ENCODE measurements at regions of chr14 and their contacts with region 1.

Region 1: DNA sequence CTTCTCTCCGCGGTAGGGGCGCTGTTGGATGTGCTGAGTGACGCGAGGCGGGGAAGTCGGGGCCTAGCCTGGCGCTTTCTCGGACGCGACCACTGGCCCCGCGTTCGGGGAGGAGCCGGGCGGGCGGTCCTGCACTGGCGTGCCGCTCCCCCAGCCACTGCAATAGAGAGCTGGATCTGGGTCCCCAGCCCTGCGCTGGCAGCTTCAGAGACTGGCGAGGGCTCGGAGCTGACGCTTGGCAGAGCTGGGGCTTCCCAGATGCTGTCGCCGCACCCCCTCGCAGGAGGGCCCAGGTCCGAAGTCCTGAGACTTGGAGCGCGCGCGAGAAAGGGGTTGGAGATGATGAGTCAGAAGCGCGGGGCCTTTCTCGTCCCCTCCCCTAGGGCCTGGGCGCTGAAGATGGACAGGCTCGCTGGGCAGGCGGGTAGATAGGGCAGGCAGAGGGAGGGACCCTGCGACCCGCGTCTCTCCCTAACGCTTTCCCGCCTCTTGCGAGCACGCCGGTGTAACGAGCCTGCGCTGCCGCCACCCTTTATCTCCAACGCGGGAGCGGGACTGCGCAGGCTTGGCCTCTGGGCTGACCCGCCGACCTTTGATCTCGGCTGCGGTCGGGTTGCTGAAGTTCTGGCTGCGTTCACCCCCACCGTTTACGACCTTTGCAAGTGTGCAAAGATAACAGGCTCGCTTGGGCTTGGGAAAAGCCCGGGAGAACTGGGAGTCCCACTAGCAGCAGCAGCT is 3.0 kb downstream of the TMEM253 start:
- DNase-seq: peak; percentile 94 to 97
- ATAC-seq: peak; percentile 95 to 98 (median 97)
- H3K4me3 ChIP-seq: peak overlapping the region; percentile 50 to 80 (median 64)
- H3K27ac ChIP-seq: peak overlapping the region; percentile 90 to 99 (median 97)
- H3K4me1 ChIP-seq: peaks cover 6 to 58% (median 42%) of the 10 kb centered on the region in 9 donors
- H3K27me3 ChIP-seq: no peaks in the 10 kb centered on the region
- CTCF ChIP-seq: peak; percentile 70 to 92 (median 81)

Region 2: GRCh38 chr14:20794644-20795369 is 309.1 kb before region 1 on chr14:
- intact Hi-C with region 1: no loop called
- DNase-seq: no peak
- ATAC-seq: no peak
- H3K4me3 ChIP-seq: no peak overlapping the region
- H3K27ac ChIP-seq: peak overlapping the region in 1 of 10 donors; percentile 28
- H3K4me1 ChIP-seq: peaks cover 3 to 55% (median 24%) of the 10 kb centered on the region in 9 donors
- H3K27me3 ChIP-seq: no peaks in the 10 kb centered on the region
- CTCF ChIP-seq: no peak

Region 3: GRCh38 chr14:21014761-21015190 is 89.1 kb before region 1 on chr14:
- intact Hi-C with region 1: loop called in 4 of 10 experiments (anchors 5 kb)
- DNase-seq: peak; percentile 70 to 91
- ATAC-seq: peak; percentile 70 to 89 (median 83)
- H3K4me3 ChIP-seq: no peak overlapping the region
- H3K27ac ChIP-seq: peak overlapping the region in 4 of 10 donors; percentile 6 to 34 (median 14)
- H3K4me1 ChIP-seq: peaks cover 0 to 38% (median 6%) of the 10 kb centered on the region in 9 donors
- H3K27me3 ChIP-seq: no peaks in the 10 kb centered on the region
- CTCF ChIP-seq: peak; percentile 84 to 98 (median 93)

Region 4: GRCh38 chr14:21024585-21025370 is 79.1 kb before region 1 on chr14 and contains the start of gene NDRG2:
- intact Hi-C with region 1: loop called in 2 of 10 experiments (anchors 5 kb)
- DNase-seq: peak; percentile 87 to 91
- ATAC-seq: peak; percentile 82 to 94 (median 85)
- H3K4me3 ChIP-seq: peak within 1 kb of the TSS; percentile 59 to 98 (median 82)
- H3K27ac ChIP-seq: peak within 1 kb of the TSS; percentile 86 to 100 (median 98)
- H3K4me1 ChIP-seq: peaks cover 14 to 57% (median 36%) of the 10 kb centered on the region in 9 donors
- H3K27me3 ChIP-seq: peaks cover 0 to 23% (median 0%) of the 10 kb centered on the region in 7 donors
- CTCF ChIP-seq: no peak
- total RNA-seq, gene NDRG2: 242 to 420 (median 299) TPM

Region 5: DNA sequence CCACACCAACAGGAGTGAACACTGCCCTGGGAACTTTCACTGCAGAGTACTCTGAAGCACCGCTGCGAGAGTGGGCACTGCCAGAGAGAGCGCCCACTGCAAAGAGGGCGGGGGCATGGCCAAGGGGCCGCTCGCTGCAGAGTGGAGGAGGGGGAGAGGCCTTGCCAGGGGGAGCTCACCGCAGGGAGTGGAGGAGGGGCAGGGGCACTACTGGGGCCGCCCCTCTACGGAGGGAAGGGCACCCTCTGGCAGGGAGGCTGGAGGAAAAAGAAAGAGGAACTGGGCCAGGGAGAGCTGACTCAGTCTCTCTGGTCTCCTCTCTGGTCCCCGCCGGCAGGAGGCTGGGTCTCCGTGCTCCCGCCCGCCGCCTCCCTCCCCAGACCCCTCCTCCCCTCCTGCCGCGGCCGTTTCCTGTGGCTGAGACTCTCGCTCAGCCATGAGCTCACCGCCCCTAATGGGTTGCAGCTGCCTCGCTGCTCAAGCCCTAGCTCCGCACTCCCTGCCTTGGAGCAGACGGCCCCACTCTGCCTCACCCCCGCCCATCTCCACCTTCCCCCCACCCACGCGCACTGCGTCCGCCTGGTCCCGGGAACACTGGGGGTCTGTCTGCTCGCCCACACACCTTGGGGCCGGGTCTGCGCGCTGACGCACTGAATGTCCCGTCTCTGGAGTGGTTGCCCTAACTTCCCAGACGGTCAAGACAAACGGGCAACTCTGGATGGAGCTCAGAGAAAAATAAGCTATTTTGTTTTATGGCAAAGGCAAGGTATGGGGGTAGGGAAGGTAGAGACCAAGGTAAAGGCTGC is 32.5 kb before region 1 on chr14:
- intact Hi-C with region 1: loop called (anchors 1 to 5 kb)
- DNase-seq: peak; percentile 88 to 91
- ATAC-seq: peak; percentile 69 to 81 (median 74)
- H3K4me3 ChIP-seq: peak overlapping the region; percentile 61 to 86 (median 78)
- H3K27ac ChIP-seq: peak overlapping the region; percentile 64 to 98 (median 95)
- H3K4me1 ChIP-seq: peaks cover 6 to 44% (median 34%) of the 10 kb centered on the region in 9 donors
- H3K27me3 ChIP-seq: peaks cover 0 to 17% (median 0%) of the 10 kb centered on the region in 7 donors
- CTCF ChIP-seq: peak in 2 of 9 donors; percentile 5 to 15

Region 6: GRCh38 chr14:21092273-21093011 is 11.4 kb before region 1 on chr14:
- intact Hi-C with region 1: loop called in 1 of 10 experiments (anchors 1 kb)
- DNase-seq: peak; percentile 80 to 90
- ATAC-seq: peak; percentile 77 to 91 (median 86)
- H3K4me3 ChIP-seq: no peak overlapping the region
- H3K27ac ChIP-seq: peak overlapping the region in 3 of 10 donors; percentile 11 to 53 (median 28)
- H3K4me1 ChIP-seq: peaks cover 0 to 39% (median 17%) of the 10 kb centered on the region in 9 donors
- H3K27me3 ChIP-seq: no peaks in the 10 kb centered on the region
- CTCF ChIP-seq: peak; percentile 99 to 100 (median 100)

Region 7: DNA sequence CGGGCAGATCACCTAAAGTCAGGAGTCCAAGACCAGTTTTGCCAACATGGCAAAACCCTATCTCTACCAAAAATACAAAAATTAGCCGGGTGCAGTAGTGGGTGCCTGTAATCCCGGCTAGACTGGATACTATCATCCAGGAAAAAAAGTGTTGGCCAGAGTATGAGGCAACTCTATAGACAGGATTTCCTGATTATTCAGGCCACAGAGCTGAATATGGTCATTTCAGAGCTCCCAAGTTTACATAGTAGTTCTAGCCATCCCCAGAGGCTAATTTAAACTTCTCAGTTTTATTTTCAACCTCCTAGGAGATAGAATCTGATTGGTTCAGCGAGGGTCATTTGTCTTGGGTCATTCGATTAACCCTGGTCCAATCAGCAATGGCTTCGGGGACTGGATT is 183.3 kb after region 1 on chr14:
- intact Hi-C with region 1: no loop called
- DNase-seq: no peak
- ATAC-seq: no peak
- H3K4me3 ChIP-seq: no peak overlapping the region
- H3K27ac ChIP-seq: no peak overlapping the region
- H3K4me1 ChIP-seq: no peaks in the 10 kb centered on the region
- H3K27me3 ChIP-seq: no peaks in the 10 kb centered on the region
- CTCF ChIP-seq: no peak

Measured in heart right ventricle (tissue), 16 donors.